ENCODE measurements at regions of chr11 and their contacts with region 1.

Region 1: DNA sequence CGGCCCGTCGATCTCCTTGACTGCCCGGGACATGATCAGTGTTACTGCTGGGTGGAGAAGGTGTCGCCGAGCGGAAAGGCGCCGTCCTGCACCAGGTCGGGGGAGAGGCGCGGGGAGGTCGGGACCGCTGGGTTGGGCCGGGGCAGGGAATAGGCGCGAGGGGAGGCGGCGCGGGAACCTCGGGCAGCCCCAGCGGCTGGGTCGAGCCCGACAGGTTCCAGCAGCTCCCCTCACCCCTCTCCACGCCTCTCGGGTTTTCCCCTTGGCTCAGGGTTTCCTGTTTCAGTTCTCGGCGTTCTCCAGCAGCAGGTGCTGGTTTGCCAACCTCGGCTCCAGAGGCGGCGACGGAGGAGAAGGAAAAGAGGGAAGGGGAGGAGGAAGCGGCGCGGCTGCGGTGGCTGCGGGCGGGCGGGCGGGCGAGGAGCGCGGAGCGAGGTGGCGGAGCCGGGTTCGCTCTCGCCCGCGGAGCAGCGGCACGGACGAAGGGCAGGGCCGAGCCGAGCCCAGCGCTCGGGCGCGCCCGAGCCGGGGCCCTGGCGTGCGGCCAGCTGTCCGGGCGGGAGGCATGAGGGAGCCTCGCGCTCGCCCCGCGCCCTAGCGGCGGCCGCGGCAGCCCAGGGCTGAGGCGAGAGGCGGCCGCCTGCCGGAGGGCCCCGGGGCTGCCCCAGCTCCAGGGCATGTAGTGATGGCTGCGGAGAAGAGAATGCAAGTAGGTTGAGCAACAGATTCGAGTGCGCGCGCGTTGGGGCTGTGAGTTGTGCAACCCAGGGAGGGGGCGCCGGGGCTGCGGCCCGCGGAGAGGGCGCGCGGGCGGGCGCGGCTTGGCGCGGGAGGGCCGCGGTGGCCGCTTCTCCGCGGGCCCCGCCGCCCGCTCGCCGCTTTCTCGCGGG is at the start of gene ZC3H12C:
- DNase-seq: peak; percentile 53 to 81 (median 74)
- H3K4me3 ChIP-seq: peak within 1 kb of the TSS; percentile 58 to 91 (median 79)
- H3K27ac ChIP-seq: peak within 1 kb of the TSS; percentile 78 to 99 (median 95)
- H3K27me3 ChIP-seq: no peaks in the 10 kb centered on the region
- CTCF ChIP-seq: peak in 36 of 56 donors; percentile 5 to 73 (median 33)
- total RNA-seq, gene ZC3H12C: 11.6 to 30.2 (median 18.3) TPM

Region 2: GRCh38 chr11:109946322-109946846 is 146.4 kb before region 1 on chr11:
- intact Hi-C with region 1: loop called (anchors 1 to 2 kb)
- DNase-seq: peak; percentile 55 to 95 (median 86)
- H3K4me3 ChIP-seq: peak overlapping the region in 58 of 59 donors; percentile 10 to 68 (median 48)
- H3K27ac ChIP-seq: peak overlapping the region in 56 of 59 donors; percentile 4 to 87 (median 64)
- H3K27me3 ChIP-seq: no peaks in the 10 kb centered on the region
- CTCF ChIP-seq: peak; percentile 44 to 97 (median 94)

Region 3: DNA sequence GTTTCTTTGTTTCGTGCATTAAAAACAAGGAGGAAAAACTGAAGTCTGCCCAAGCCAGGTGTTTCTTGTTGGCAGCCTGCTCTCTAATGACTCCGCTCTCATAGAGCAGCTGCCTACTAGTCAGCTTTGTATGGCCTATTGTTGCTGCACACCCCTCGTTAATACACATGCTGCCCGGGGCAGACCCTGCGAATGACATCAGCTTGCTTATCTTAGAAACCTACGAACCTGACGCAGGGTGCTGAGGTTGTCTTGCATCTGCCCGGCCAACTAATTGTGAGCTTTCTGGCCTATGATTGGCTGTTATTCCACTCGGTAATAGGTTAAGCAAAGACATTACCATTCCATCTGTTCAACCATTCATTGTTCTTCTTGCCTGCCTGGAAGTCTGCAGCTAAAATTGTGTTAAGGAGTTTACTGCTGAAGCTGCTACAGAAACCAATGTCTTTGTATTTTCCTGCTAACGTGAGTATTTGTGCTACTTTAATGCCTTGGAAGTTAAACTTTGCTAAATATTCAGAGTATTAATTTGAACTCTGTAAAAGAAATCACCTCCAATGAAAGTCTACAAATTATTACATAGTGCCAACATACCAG is 38.0 kb after region 1 on chr11:
- intact Hi-C with region 1: loop called in 1 of 2 experiments (anchors 5 kb)
- DNase-seq: peak in 1 of 10 donors; percentile 18
- H3K4me3 ChIP-seq: peak overlapping the region in 25 of 59 donors; percentile 0 to 50 (median 18)
- H3K27ac ChIP-seq: peak overlapping the region in 40 of 59 donors; percentile 5 to 76 (median 38)
- H3K27me3 ChIP-seq: no peaks in the 10 kb centered on the region
- CTCF ChIP-seq: no peak

Region 4: DNA sequence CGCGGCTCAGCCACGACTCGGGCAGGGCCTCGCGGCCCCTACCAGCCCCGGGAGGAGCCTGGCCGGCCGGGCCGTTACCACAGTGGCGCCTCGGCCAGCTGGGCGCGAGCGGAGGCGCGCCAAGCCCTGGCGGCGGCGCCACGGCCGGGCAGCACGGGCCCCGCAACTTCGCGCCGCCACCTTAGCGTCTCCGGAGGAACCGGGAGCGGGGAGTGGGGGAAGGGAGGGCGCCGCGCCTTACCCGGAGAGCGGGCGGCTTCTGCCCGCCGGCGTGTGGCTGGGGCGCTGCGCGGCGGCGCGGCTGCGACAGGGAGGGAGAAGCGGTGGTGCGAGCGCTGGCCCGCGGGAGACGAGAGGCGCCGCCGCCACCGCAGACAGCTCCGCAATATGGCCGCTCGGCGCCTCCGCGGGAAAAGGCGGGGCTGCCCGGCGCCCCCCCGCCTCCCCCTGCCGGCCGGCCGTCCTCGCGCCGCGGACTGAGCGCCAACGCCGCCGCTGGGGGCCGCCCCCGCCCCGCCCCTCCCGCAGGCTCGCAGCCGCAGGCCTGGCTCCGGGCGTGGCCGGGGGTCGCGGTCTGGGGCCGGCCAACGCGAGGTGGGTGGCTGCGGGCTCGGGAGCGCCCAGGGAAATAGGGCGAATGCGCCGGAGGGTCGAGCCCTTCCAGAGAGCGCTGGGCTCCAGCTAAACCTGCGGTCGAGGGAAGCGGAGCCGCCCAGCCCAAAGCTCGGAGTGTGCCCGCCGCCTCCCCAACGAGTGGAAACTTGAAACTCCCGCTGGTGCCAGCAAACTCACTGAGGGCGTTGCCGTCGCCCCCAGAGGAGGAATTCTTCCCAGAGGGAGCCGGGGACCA is 203.7 kb after region 1 on chr11 and contains the start of gene RDX:
- intact Hi-C with region 1: loop called in 1 of 2 experiments (anchors 2 kb)
- DNase-seq: peak; percentile 43 to 85 (median 65)
- H3K4me3 ChIP-seq: peak within 1 kb of the TSS; percentile 55 to 96 (median 87)
- H3K27ac ChIP-seq: peak within 1 kb of the TSS; percentile 85 to 99 (median 96)
- H3K27me3 ChIP-seq: no peaks in the 10 kb centered on the region
- CTCF ChIP-seq: peak in 12 of 56 donors; percentile 13 to 38 (median 26)
- total RNA-seq, gene RDX: 51.8 to 308 (median 121) TPM

Region 5: GRCh38 chr11:110429731-110430266 is 337.0 kb after region 1 on chr11 and contains the start of gene FDX1:
- intact Hi-C with region 1: loop called (anchors 2 to 5 kb)
- DNase-seq: peak; percentile 60 to 87 (median 74)
- H3K4me3 ChIP-seq: peak within 1 kb of the TSS; percentile 69 to 97 (median 88)
- H3K27ac ChIP-seq: peak within 1 kb of the TSS; percentile 67 to 98 (median 93)
- H3K27me3 ChIP-seq: no peaks in the 10 kb centered on the region
- CTCF ChIP-seq: peak in 55 of 56 donors; percentile 3 to 83 (median 60)
- total RNA-seq, gene FDX1: 7.2 to 13.9 (median 10.5) TPM